ENCODE measurements at regions of chr19 and their contacts with region 1.

Region 1: GRCh38 chr19:48993175-48994034 is at the starts of genes GYS1 and RUVBL2:
- DNase-seq: peak; percentile 99 to 100 (median 99)
- H3K4me3 ChIP-seq: peak within 1 kb of the TSS; percentile 91 to 98
- H3K4me3 Mint-ChIP-seq: peak within 1 kb of the TSS; percentile 90 to 98 (median 96)
- H3K27ac ChIP-seq: peak within 1 kb of the TSS; percentile 82
- H3K27ac Mint-ChIP-seq: peak within 1 kb of the TSS; percentile 84 to 99 (median 98)
- H3K4me1 ChIP-seq: peaks cover 30% of the 10 kb centered on the region
- H3K4me1 Mint-ChIP-seq: peaks cover 23 to 56% (median 31%) of the 10 kb centered on the region in 4 donors
- H3K27me3 ChIP-seq: no peaks in the 10 kb centered on the region
- H3K27me3 Mint-ChIP-seq: no peaks in the 10 kb centered on the region
- total RNA-seq, gene GYS1: 56.2 to 56.4 TPM
- total RNA-seq, gene RUVBL2: 27.9 to 28.5 TPM

Region 2: GRCh38 chr19:48637170-48637947 is 356.0 kb before region 1 on chr19 and contains the start of gene DBP:
- CTCF ChIA-PET with region 1: no interaction called
- POLR2A ChIA-PET with region 1: no interaction called
- intact Hi-C with region 1: loop called (anchors 5 kb)
- DNase-seq: peak in 4 of 5 donors; percentile 99 to 100 (median 100)
- H3K4me3 ChIP-seq: peak within 1 kb of the TSS; percentile 52 to 88
- H3K4me3 Mint-ChIP-seq: peak within 1 kb of the TSS; percentile 89 to 100 (median 99)
- H3K27ac ChIP-seq: peak within 1 kb of the TSS; percentile 88
- H3K27ac Mint-ChIP-seq: peak within 1 kb of the TSS; percentile 93 to 100 (median 99)
- H3K4me1 ChIP-seq: peaks cover 46% of the 10 kb centered on the region
- H3K4me1 Mint-ChIP-seq: peaks cover 20 to 55% (median 40%) of the 10 kb centered on the region in 4 donors
- H3K27me3 ChIP-seq: no peaks in the 10 kb centered on the region
- H3K27me3 Mint-ChIP-seq: no peaks in the 10 kb centered on the region
- total RNA-seq, gene DBP: 62.6 to 69.5 TPM

Region 3: GRCh38 chr19:48899781-48900476 is 93.5 kb before region 1 on chr19 and contains the start of gene NUCB1:
- CTCF ChIA-PET with region 1: interaction called, 17 read pairs
- POLR2A ChIA-PET with region 1: interaction called, 7 read pairs
- intact Hi-C with region 1: no loop called
- DNase-seq: peak; percentile 97 to 99 (median 97)
- H3K4me3 ChIP-seq: peak within 1 kb of the TSS; percentile 73 to 85
- H3K4me3 Mint-ChIP-seq: peak within 1 kb of the TSS; percentile 92 to 99 (median 98)
- H3K27ac ChIP-seq: peak within 1 kb of the TSS; percentile 81
- H3K27ac Mint-ChIP-seq: peak within 1 kb of the TSS; percentile 88 to 97 (median 95)
- H3K4me1 ChIP-seq: peaks cover 30% of the 10 kb centered on the region
- H3K4me1 Mint-ChIP-seq: peaks cover 18 to 49% (median 29%) of the 10 kb centered on the region in 4 donors
- H3K27me3 ChIP-seq: peaks cover 4% of the 10 kb centered on the region
- H3K27me3 Mint-ChIP-seq: peaks cover under 1 to 2% of the 10 kb centered on the region in 2 donors
- total RNA-seq, gene NUCB1: 132 to 145 TPM

Region 4: GRCh38 chr19:48970923-48971395 is 22.4 kb before region 1 on chr19:
- CTCF ChIA-PET with region 1: interaction called, 20 read pairs
- POLR2A ChIA-PET with region 1: interaction called, 68 read pairs
- intact Hi-C with region 1: no loop called
- DNase-seq: peak; percentile 67 to 77 (median 68)
- H3K4me3 ChIP-seq: no peak overlapping the region
- H3K4me3 Mint-ChIP-seq: peak overlapping the region in 1 of 8 donors; percentile 6
- H3K27ac ChIP-seq: no peak overlapping the region
- H3K27ac Mint-ChIP-seq: peak overlapping the region in 5 of 7 donors; percentile 27 to 80 (median 64)
- H3K4me1 ChIP-seq: peaks cover 19% of the 10 kb centered on the region
- H3K4me1 Mint-ChIP-seq: peaks cover 8 to 24% (median 17%) of the 10 kb centered on the region in 4 donors
- H3K27me3 ChIP-seq: no peaks in the 10 kb centered on the region
- H3K27me3 Mint-ChIP-seq: no peaks in the 10 kb centered on the region

Region 5: DNA sequence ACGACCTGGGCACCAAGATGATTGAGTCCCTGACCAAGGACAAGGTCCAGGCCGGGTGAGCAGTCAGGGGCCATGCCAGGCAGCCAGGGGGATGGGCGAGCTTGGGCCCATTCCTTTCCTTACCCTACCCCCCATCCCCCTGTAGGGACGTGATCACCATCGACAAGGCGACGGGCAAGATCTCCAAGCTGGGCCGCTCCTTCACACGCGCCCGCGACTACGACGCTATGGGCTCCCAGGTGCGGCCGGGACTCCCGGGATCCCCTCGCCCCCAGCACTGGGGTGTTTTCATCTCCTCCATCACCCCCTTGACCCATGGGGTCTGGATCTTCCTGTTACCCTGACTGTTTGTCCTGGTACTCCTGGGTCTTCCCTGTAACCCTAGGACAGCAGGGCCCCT is 16.4 kb after region 1 on chr19:
- CTCF ChIA-PET with region 1: interaction called, 24 read pairs
- POLR2A ChIA-PET with region 1: no interaction called
- intact Hi-C with region 1: no loop called
- DNase-seq: no peak
- H3K4me3 ChIP-seq: no peak overlapping the region
- H3K4me3 Mint-ChIP-seq: no peak overlapping the region
- H3K27ac ChIP-seq: no peak overlapping the region
- H3K27ac Mint-ChIP-seq: no peak overlapping the region
- H3K4me1 ChIP-seq: no peaks in the 10 kb centered on the region
- H3K4me1 Mint-ChIP-seq: no peaks in the 10 kb centered on the region
- H3K27me3 ChIP-seq: no peaks in the 10 kb centered on the region
- H3K27me3 Mint-ChIP-seq: no peaks in the 10 kb centered on the region

Region 6: GRCh38 chr19:49085020-49085867 is 91.8 kb after region 1 on chr19 and contains the start of gene SNRNP70:
- CTCF ChIA-PET with region 1: interaction called, 3 read pairs
- POLR2A ChIA-PET with region 1: no interaction called
- intact Hi-C with region 1: loop called (anchors 2 kb)
- DNase-seq: peak; percentile 99 to 100 (median 100)
- H3K4me3 ChIP-seq: peak within 1 kb of the TSS; percentile 72 to 95
- H3K4me3 Mint-ChIP-seq: peak within 1 kb of the TSS; percentile 82 to 96 (median 94)
- H3K27ac ChIP-seq: peak within 1 kb of the TSS; percentile 81
- H3K27ac Mint-ChIP-seq: peak within 1 kb of the TSS; percentile 88 to 98 (median 93)
- H3K4me1 ChIP-seq: peaks cover 32% of the 10 kb centered on the region
- H3K4me1 Mint-ChIP-seq: peaks cover 22 to 46% (median 32%) of the 10 kb centered on the region in 4 donors
- H3K27me3 ChIP-seq: no peaks in the 10 kb centered on the region
- H3K27me3 Mint-ChIP-seq: peaks cover 0 to 3% of the 10 kb centered on the region in 2 donors
- total RNA-seq, gene SNRNP70: 675 to 689 TPM

Region 7: GRCh38 chr19:49148784-49149651 is 155.6 kb after region 1 on chr19:
- CTCF ChIA-PET with region 1: interaction called, 17 read pairs
- POLR2A ChIA-PET with region 1: no interaction called
- intact Hi-C with region 1: loop called (anchors 2 kb)
- DNase-seq: peak; percentile 64 to 85 (median 69)
- H3K4me3 ChIP-seq: peak overlapping the region in 1 of 2 donors; percentile 42
- H3K4me3 Mint-ChIP-seq: peak overlapping the region; percentile 63 to 91 (median 74)
- H3K27ac ChIP-seq: no peak overlapping the region
- H3K27ac Mint-ChIP-seq: peak overlapping the region in 1 of 7 donors; percentile 71
- H3K4me1 ChIP-seq: peaks cover 46% of the 10 kb centered on the region
- H3K4me1 Mint-ChIP-seq: peaks cover 14 to 58% (median 26%) of the 10 kb centered on the region in 4 donors
- H3K27me3 ChIP-seq: peaks cover 39% of the 10 kb centered on the region
- H3K27me3 Mint-ChIP-seq: peaks cover 36 to 53% of the 10 kb centered on the region in 2 donors